HEK293T (cell line): ENCODE measurements at regions of chr6 and their contacts with region 1.

Region 1: DNA sequence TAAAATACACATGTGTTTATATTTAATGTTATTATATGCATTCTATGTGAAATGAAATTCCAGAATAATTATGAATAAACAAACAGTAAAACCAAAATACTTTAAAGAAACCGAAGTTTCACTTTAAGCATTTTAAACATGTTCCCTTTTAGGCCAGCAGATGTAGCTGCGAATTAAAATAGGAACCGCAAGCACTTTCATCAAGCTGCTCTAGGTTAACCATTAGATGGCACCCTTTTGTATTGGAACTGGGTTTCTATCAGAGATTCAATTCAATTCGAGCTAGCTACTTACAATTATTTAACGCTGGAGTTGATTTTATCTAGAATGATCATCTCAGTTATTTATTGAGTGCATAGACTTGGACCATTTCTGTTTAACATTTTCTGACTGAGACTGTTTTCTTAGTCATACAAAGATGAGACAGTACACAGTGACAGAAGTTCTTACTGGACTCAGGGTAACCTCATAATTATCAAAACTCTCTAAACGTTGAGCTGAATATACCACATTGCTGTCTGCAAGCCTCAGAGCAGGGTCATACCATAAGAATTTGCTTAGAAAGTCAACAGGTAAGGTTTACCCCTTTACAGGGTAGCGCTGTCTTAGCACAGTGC is 8.5 kb downstream of the TMEM242 start:
- DNase-seq: peak; percentile 68

Region 2: DNA sequence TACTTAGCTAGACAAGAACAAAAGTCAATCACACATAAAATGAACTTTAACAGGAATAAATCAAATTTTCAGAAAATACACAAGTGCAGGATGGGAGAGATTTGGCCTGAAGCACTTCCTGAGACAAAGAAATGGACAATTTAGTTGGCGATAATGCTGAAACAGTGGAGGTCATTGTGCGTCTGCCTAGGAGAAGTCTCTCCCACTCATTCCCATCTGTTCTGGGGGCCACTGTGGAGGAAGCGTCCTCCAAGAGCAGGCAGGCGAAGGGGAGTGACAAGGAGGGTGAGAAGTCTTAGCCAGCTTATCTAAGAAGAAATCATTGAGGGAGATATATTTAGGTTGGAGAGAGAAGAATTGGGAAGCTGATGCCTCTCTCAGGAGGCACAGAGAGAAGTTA is 18.7 kb after region 1 on chr6:
- CTCF ChIA-PET with region 1: interaction called, 11 read pairs
- POLR2A ChIA-PET with region 1: no interaction called
- DNase-seq: no peak

Region 3: GRCh38 chr6:157614026-157614568 is 299.3 kb after region 1 on chr6:
- CTCF ChIA-PET with region 1: interaction called, 10 read pairs
- POLR2A ChIA-PET with region 1: no interaction called
- DNase-seq: no peak